CD4-positive, alpha-beta T cell (primary cell): ENCODE measurements at regions of chr6 and their contacts with region 1.

Region 1: GRCh38 chr6:137707590-137708360 is 159.3 kb upstream of the TNFAIP3 start:
- DNase-seq: peak; percentile 57 to 98 (median 76)
- ATAC-seq: peak; percentile 76
- H3K4me3 ChIP-seq: no peak overlapping the region
- H3K4me3 Mint-ChIP-seq: peak overlapping the region; percentile 75
- H3K27ac ChIP-seq: peak overlapping the region; percentile 67 to 89
- H3K27ac Mint-ChIP-seq: peak overlapping the region; percentile 88
- H3K4me1 ChIP-seq: peaks cover 57% of the 10 kb centered on the region
- H3K4me1 Mint-ChIP-seq: peaks cover 54% of the 10 kb centered on the region
- H3K27me3 ChIP-seq: no peaks in the 10 kb centered on the region
- H3K27me3 Mint-ChIP-seq: no peaks in the 10 kb centered on the region
- CTCF ChIP-seq: peak; percentile 79

Region 2: GRCh38 chr6:137799950-137800568 is 92.3 kb after region 1 on chr6:
- CTCF ChIA-PET with region 1: interaction called, 35 read pairs
- POLR2A ChIA-PET with region 1: interaction called, 25 read pairs
- intact Hi-C with region 1: loop called (anchors 1 to 2 kb)
- DNase-seq: peak in 13 of 14 experiments; percentile 22 to 92 (median 57)
- ATAC-seq: peak; percentile 82
- H3K4me3 ChIP-seq: no peak overlapping the region
- H3K4me3 Mint-ChIP-seq: peak overlapping the region; percentile 14
- H3K27ac ChIP-seq: no peak overlapping the region
- H3K27ac Mint-ChIP-seq: peak overlapping the region; percentile 78
- H3K4me1 ChIP-seq: peaks cover 24% of the 10 kb centered on the region
- H3K4me1 Mint-ChIP-seq: peaks cover 76% of the 10 kb centered on the region
- H3K27me3 ChIP-seq: no peaks in the 10 kb centered on the region
- H3K27me3 Mint-ChIP-seq: no peaks in the 10 kb centered on the region
- CTCF ChIP-seq: peak; percentile 79

Region 3: GRCh38 chr6:137873273-137873762 is 165.5 kb after region 1 on chr6:
- CTCF ChIA-PET with region 1: interaction called, 65 read pairs
- POLR2A ChIA-PET with region 1: interaction called, 66 read pairs
- intact Hi-C with region 1: no loop called
- DNase-seq: peak in 5 of 14 experiments; percentile 31 to 92 (median 67)
- ATAC-seq: peak; percentile 3
- H3K4me3 ChIP-seq: peak overlapping the region; percentile 21
- H3K4me3 Mint-ChIP-seq: peak overlapping the region; percentile 96
- H3K27ac ChIP-seq: peak overlapping the region in 1 of 2 donors; percentile 96
- H3K27ac Mint-ChIP-seq: peak overlapping the region; percentile 95
- H3K4me1 ChIP-seq: peaks cover 47% of the 10 kb centered on the region
- H3K4me1 Mint-ChIP-seq: peaks cover 87% of the 10 kb centered on the region
- H3K27me3 ChIP-seq: no peaks in the 10 kb centered on the region
- H3K27me3 Mint-ChIP-seq: no peaks in the 10 kb centered on the region
- CTCF ChIP-seq: no peak

Region 4: GRCh38 chr6:137944793-137945498 is 237.2 kb after region 1 on chr6:
- CTCF ChIA-PET with region 1: interaction called, 3 read pairs
- POLR2A ChIA-PET with region 1: interaction called, 10 read pairs
- intact Hi-C with region 1: loop called (anchors 1 kb)
- DNase-seq: peak in 5 of 14 experiments; percentile 10 to 69 (median 53)
- ATAC-seq: peak; percentile 71
- H3K4me3 ChIP-seq: no peak overlapping the region
- H3K4me3 Mint-ChIP-seq: no peak overlapping the region
- H3K27ac ChIP-seq: no peak overlapping the region
- H3K27ac Mint-ChIP-seq: no peak overlapping the region
- H3K4me1 ChIP-seq: peaks cover 5% of the 10 kb centered on the region
- H3K4me1 Mint-ChIP-seq: peaks cover 20% of the 10 kb centered on the region
- H3K27me3 ChIP-seq: no peaks in the 10 kb centered on the region
- H3K27me3 Mint-ChIP-seq: no peaks in the 10 kb centered on the region
- CTCF ChIP-seq: peak; percentile 96

Region 5: DNA sequence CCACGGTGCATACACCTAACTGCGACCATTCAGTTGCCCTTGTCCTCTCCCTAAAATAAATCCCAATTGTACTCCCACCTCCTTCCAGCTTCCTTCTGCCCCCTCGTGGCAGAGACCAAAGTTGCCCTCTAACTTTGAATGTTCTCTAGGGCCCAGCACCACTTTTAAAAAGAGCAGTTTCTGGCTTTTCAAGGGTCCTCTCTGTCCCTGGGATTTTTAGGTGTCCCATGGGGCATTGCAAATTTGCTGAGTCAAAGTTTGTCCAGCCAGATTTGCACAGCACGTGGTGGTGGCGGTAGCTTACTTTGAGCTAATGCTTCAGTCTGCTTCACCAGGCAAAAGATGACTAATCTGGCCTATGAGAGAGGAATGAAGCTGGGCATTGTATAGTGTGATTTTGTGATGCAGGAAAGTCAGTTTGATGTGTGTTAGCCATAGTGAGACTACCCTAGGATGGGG is 299.3 kb after region 1 on chr6:
- CTCF ChIA-PET with region 1: no interaction called
- POLR2A ChIA-PET with region 1: interaction called, 3 read pairs
- intact Hi-C with region 1: loop called (anchors 1 kb)
- DNase-seq: peak in 8 of 14 experiments; percentile 1 to 35 (median 12)
- ATAC-seq: no peak
- H3K4me3 ChIP-seq: no peak overlapping the region
- H3K4me3 Mint-ChIP-seq: no peak overlapping the region
- H3K27ac ChIP-seq: no peak overlapping the region
- H3K27ac Mint-ChIP-seq: no peak overlapping the region
- H3K4me1 ChIP-seq: no peaks in the 10 kb centered on the region
- H3K4me1 Mint-ChIP-seq: no peaks in the 10 kb centered on the region
- H3K27me3 ChIP-seq: no peaks in the 10 kb centered on the region
- H3K27me3 Mint-ChIP-seq: no peaks in the 10 kb centered on the region
- CTCF ChIP-seq: peak; percentile 61

Region 6: GRCh38 chr6:138403801-138404661 is 696.3 kb after region 1 on chr6 and contains the start of gene HEBP2:
- CTCF ChIA-PET with region 1: no interaction called
- POLR2A ChIA-PET with region 1: no interaction called
- intact Hi-C with region 1: loop called in 1 of 2 experiments (anchors 10 kb)
- DNase-seq: peak; percentile 77 to 97 (median 94)
- ATAC-seq: peak; percentile 93
- H3K4me3 ChIP-seq: peak within 1 kb of the TSS; percentile 91
- H3K4me3 Mint-ChIP-seq: peak within 1 kb of the TSS; percentile 87
- H3K27ac ChIP-seq: peak within 1 kb of the TSS; percentile 61 to 75
- H3K27ac Mint-ChIP-seq: peak within 1 kb of the TSS; percentile 86
- H3K4me1 ChIP-seq: peaks cover 27% of the 10 kb centered on the region
- H3K4me1 Mint-ChIP-seq: peaks cover 21% of the 10 kb centered on the region
- H3K27me3 ChIP-seq: no peaks in the 10 kb centered on the region
- H3K27me3 Mint-ChIP-seq: no peaks in the 10 kb centered on the region
- CTCF ChIP-seq: peak; percentile 48
- total RNA-seq, gene HEBP2: 31.8 to 32.9 TPM